Activated T-helper 1 cell treated with anti-CD3 and anti-CD28 coated beads, Interleukin-12 subunit alpha, Interleukin-12 subunit beta, Interleukin-2, Interleukin-4 antibody, amounts not matched to agents 30 ng/mL and 10 ng/mL and 1 ng/mL, durations not matched to agents 14 hours and 24 hours and 36 hours (primary cell): ENCODE measurements at regions of chr2 and their contacts with region 1.

Region 1: DNA sequence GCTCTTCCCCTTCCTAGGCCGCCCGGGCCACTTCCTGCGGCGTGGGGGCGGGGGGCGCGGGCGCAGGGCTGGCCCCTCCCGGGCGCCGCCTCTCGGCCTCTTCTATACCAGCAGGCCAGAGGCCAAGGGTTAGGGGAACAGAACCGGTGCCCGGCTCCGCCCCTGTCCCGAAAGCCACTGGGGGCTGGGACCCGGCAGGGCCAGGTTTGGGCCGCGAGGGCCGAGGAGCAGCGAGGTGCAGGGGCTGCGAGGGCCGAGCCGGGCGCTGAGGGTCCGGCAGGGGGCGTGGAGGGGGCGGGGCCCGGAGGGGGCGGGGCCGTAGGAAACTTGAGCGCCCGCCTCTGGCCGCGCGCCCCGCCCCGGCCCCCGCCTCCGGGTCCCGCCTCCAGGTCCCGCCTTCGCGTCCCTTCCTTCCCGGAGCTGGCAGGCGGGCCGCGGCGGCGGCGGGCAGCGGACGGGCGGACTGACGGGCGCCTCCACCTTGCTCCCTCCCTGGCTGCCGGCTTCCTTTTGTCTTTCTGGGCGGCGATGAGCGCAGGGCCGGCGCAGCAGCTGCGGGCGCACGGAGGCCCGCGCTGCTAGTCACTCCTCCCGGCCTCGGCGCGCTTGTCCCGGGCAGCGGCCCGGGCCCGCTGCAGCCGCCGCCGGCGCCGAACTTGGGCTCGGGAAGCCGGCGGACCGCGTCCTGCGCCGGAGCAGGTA is at the start of gene HPCAL1:
- DNase-seq: peak; percentile 80
- H3K4me3 Mint-ChIP-seq: peak within 1 kb of the TSS; percentile 99
- H3K27ac Mint-ChIP-seq: peak within 1 kb of the TSS; percentile 90
- H3K4me1 Mint-ChIP-seq: peaks cover 73% of the 10 kb centered on the region
- H3K27me3 Mint-ChIP-seq: peaks cover 4% of the 10 kb centered on the region
- total RNA-seq, gene HPCAL1: 59.6 and 62.4 TPM in 2 replicates

Region 2: DNA sequence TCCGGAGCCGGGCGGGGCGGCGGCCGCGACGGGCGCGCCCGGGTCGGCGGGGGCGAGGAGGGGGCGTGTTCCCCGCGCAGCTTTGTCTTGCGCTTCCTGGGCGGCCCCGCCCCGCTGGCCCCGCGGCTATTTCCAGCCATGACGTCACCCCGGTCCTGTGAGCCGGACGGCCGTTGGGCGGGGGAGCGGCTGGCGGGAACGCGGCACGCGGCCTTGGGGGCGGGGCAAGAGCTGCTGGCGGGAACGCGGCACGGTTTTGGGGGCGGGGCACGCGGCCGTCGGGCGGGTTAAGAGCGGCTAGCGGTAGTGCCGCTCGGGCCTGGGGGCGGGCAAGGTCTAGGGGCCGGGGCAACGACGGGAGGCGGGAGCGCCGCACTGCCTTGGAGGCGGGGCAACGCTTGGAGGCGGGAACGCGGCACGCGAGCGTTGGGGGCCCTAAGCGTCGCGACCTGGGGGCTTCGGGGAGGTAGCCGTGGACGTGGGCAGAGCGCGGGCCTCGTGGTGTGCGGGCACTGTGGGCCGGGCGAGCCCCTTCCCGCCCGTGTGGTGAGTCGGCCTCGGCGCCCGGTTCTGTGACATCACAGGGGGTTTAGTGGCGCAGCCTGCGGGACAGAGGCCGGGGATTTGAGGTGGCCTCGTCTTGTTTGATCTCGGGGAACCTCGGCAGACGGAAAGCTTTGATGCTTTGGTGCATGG is 258.6 kb before region 1 on chr2:
- intact Hi-C with region 1: loop called (anchors 1 kb)
- DNase-seq: peak; percentile 86
- H3K4me3 Mint-ChIP-seq: peak overlapping the region; percentile 77
- H3K27ac Mint-ChIP-seq: peak overlapping the region; percentile 66
- H3K4me1 Mint-ChIP-seq: peaks cover 14% of the 10 kb centered on the region
- H3K27me3 Mint-ChIP-seq: peaks cover 22% of the 10 kb centered on the region

Region 3: GRCh38 chr2:10331027-10331701 is 28.5 kb after region 1 on chr2:
- intact Hi-C with region 1: loop called (anchors 1 kb)
- DNase-seq: peak; percentile 62
- H3K4me3 Mint-ChIP-seq: peak overlapping the region; percentile 86
- H3K27ac Mint-ChIP-seq: peak overlapping the region; percentile 95
- H3K4me1 Mint-ChIP-seq: peaks cover 59% of the 10 kb centered on the region
- H3K27me3 Mint-ChIP-seq: no peaks in the 10 kb centered on the region

Region 4: GRCh38 chr2:10408649-10409579 is 106.3 kb after region 1 on chr2:
- intact Hi-C with region 1: loop called (anchors 1 kb)
- DNase-seq: peak; percentile 76
- H3K4me3 Mint-ChIP-seq: peak overlapping the region; percentile 80
- H3K27ac Mint-ChIP-seq: peak overlapping the region; percentile 93
- H3K4me1 Mint-ChIP-seq: peaks cover 54% of the 10 kb centered on the region
- H3K27me3 Mint-ChIP-seq: no peaks in the 10 kb centered on the region

Region 5: GRCh38 chr2:10812362-10813162 is 509.9 kb after region 1 on chr2 and contains the start of gene PDIA6:
- intact Hi-C with region 1: loop called (anchors 5 kb)
- DNase-seq: peak; percentile 95
- H3K4me3 Mint-ChIP-seq: peak within 1 kb of the TSS; percentile 92
- H3K27ac Mint-ChIP-seq: peak within 1 kb of the TSS; percentile 91
- H3K4me1 Mint-ChIP-seq: peaks cover 31% of the 10 kb centered on the region
- H3K27me3 Mint-ChIP-seq: peaks cover 13% of the 10 kb centered on the region
- total RNA-seq, gene PDIA6: 171 and 173 TPM in 2 replicates